ENCODE measurements at regions of chr16 and their contacts with region 1.

Region 1: DNA sequence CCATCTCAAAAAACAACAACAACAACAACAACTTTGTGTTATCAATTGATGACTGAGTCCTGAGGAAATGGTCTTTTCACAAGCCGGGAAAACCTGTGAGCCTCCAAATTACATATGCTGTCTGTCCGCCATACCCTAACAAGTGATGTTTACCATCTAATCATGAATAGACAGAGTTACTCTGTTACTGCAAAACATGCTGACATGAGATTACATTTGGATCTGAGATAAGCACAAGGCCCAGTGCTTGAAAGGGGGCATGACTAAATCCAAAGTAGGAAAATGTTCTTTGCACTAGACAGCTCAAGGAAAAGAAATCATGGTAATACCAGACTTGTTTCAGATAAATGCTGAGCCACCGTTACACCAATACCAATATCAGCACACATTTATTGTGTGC is 8.6 kb upstream of the ATXN1L start:
- DNase-seq: no peak
- H3K4me3 ChIP-seq: no peak overlapping the region
- H3K27ac ChIP-seq: no peak overlapping the region
- H3K4me1 ChIP-seq: no peaks in the 10 kb centered on the region
- H3K27me3 ChIP-seq: no peaks in the 10 kb centered on the region
- CTCF ChIP-seq: no peak
- EP300 ChIP-seq: no peak
- POLR2A ChIP-seq: no peak

Region 2: DNA sequence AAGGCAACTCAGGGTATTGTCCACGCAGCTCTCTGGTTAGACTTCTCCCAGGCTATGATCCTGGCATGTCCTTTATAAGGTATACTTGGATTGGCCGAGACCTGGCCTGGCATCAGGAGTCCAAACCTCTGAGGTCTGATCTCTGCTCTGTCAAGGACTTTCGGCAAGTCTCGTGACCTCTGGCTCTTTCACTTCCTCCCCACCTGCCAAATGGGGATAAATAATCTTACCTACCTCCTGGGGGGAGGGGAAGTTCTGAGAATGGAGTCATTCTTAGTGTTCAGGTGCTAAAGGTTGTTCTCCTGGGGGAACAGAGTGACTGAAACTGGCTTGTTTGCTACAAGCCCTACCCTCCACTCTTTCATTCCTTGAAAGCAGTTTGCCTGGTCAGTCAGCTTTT is 16.3 kb after region 1 on chr16:
- intact Hi-C with region 1: loop called in 1 of 4 experiments (anchors 1 kb)
- DNase-seq: no peak
- H3K4me3 ChIP-seq: no peak overlapping the region
- H3K27ac ChIP-seq: no peak overlapping the region
- H3K4me1 ChIP-seq: no peaks in the 10 kb centered on the region
- H3K27me3 ChIP-seq: no peaks in the 10 kb centered on the region
- CTCF ChIP-seq: no peak
- EP300 ChIP-seq: no peak
- POLR2A ChIP-seq: no peak